ENCODE measurements at regions of chr12 and their contacts with region 1.

Region 1: DNA sequence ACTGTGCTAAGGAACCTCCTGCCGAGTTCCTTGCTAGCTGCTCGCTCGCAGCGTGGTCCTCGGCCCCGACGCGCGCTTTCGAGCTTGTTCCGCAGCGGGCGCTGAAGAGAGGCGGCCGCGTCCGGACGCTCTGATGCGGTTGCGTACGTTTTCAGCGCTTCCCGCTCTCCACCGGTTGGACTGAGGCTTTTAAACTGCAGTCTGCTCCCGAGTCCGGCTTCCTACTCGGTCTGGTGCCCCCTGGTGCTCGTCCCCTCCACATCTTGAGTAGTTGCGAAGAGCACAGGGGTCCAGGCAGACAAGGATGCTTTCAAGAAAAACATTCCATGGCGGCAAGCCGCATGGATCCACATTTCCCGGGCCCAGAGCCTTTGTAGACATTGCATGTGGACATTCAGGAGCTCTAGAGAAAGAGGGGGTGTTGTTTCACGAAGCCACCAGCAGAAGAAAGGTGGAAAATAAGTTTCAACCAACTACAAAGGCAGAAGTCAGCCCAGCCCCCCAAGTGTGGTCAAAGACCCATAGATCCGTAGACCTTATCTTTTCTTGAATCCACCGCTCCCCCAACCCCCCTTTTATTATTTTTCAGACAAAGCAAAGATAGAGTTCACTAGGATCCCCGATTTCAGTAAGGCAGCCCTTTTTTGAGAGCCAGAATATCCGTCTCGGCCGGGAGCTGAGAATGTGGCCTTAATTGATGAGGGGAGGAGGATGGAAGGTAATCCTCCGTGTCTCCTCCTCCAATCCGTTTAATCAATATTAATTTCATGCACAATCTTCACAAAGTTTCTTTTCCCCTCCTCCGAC is 984 bp upstream of the WNK1 start:
- DNase-seq: peak; percentile 90 to 92
- H3K4me3 ChIP-seq: peak overlapping the region; percentile 81
- H3K27ac ChIP-seq: peak overlapping the region; percentile 38
- H3K4me1 ChIP-seq: peaks cover 32% of the 10 kb centered on the region
- H3K27me3 ChIP-seq: no peaks in the 10 kb centered on the region
- CTCF ChIP-seq: peak; percentile 84

Region 2: DNA sequence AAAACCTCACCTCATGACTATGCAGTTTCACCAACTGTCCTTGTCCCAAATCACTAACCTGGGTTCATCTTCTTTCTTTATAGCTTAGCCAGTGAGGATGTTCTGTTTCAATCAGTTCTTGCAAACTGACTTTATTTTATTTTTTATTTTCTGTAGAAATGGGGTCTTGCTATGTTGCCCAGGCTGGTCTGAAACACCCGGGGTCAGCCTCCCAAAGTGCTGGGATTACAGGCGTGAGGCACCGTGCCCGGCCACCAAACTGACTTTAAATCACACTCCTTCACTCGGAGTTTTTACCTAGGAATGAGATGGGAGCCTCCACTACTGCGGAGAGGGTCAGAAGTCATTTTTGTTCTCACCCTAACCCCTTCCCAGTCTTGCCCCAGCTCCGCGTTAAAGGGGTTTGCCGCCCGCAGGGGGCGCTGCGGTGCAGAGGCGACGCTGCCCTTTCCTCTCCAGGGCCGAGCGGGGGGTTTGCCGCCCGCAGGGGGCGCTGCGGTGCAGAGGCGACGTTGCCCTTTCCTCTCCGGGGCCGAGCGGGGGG is 298.7 kb before region 1 on chr12:
- CTCF ChIA-PET with region 1: no interaction called
- POLR2A ChIA-PET with region 1: no interaction called
- intact Hi-C with region 1: loop called (anchors 5 kb)
- DNase-seq: no peak
- H3K4me3 ChIP-seq: no peak overlapping the region
- H3K27ac ChIP-seq: no peak overlapping the region
- H3K4me1 ChIP-seq: no peaks in the 10 kb centered on the region
- H3K27me3 ChIP-seq: peaks cover 29% of the 10 kb centered on the region
- CTCF ChIP-seq: no peak

Region 3: GRCh38 chr12:575948-576612 is 175.3 kb before region 1 on chr12:
- CTCF ChIA-PET with region 1: interaction called, 25 read pairs
- POLR2A ChIA-PET with region 1: interaction called, 26 read pairs
- intact Hi-C with region 1: loop called (anchors 1 kb)
- DNase-seq: peak; percentile 48 to 84
- H3K4me3 ChIP-seq: peak overlapping the region; percentile 33; the same call in 1 of the 2 replicates
- H3K27ac ChIP-seq: no peak overlapping the region
- H3K4me1 ChIP-seq: peaks cover 22% of the 10 kb centered on the region
- H3K27me3 ChIP-seq: no peaks in the 10 kb centered on the region
- CTCF ChIP-seq: peak; percentile 99

Region 4: DNA sequence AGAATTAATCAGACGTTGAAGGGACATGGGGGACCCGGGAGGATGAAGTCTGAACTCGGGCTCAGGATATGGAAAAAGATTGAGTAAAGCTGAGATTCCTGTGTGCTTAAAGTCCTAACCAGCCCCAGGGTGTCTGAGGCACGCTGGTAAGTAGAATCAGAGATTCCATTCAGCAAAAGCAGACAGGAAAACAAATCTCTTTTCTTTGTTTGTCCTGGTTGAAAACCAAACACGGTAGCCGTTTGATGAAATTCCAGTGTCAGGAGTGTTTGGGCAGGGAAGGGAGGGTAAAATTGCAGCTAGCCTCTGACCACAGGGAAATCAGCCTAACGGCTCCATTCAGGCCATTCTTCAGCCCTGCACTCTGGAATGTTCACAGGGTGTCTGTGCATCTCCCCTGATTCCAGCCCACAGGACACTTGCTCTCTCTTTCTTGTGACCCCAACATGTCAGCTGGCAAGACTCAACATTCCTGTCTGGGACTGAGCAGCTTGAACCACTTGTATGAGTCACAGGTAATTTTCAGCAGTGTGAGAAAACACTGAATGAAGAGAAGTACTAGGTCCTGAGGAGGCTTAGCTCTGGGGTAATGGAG is 119.2 kb before region 1 on chr12:
- CTCF ChIA-PET with region 1: interaction called, 3 read pairs
- POLR2A ChIA-PET with region 1: no interaction called
- intact Hi-C with region 1: loop called (anchors 1 kb)
- DNase-seq: peak; percentile 77 to 95
- H3K4me3 ChIP-seq: peak overlapping the region; percentile 10; the same call in 1 of the 2 replicates
- H3K27ac ChIP-seq: peak overlapping the region; percentile 68
- H3K4me1 ChIP-seq: peaks cover 57% of the 10 kb centered on the region
- H3K27me3 ChIP-seq: no peaks in the 10 kb centered on the region
- CTCF ChIP-seq: no peak

Region 5: DNA sequence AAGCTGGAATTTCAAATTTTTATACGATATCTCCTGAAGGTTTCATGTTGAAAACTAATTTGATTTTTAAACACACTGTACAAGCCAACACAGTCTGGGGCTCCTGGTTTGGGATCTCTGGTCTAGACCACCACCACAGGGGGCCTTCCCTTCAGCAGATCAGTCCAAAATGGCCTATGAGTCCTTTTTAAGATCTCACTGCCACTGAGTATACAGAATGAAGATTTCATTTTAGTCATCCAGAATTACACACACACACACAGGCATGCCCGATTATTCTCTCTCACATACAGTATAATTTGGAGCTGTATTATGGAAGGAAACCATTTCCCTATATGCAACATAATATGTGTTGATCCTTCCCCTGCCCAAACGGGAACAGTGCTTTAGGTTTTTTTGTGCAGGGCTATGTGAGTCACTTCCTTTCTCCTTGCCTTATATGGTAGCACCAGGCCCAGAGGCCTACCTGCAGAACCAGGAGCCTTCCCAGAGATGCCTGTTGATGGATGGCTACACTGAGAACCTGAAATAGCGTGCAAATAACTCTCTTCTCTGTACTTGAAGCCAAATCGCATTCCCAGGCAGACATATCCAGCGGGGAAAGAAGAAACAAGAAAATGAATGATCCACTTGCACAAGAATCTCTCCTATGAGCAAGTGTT is 27.1 kb before region 1 on chr12:
- CTCF ChIA-PET with region 1: no interaction called
- POLR2A ChIA-PET with region 1: no interaction called
- intact Hi-C with region 1: no loop called
- DNase-seq: peak; percentile 48 to 67
- H3K4me3 ChIP-seq: no peak overlapping the region
- H3K27ac ChIP-seq: no peak overlapping the region
- H3K4me1 ChIP-seq: peaks cover 7% of the 10 kb centered on the region
- H3K27me3 ChIP-seq: no peaks in the 10 kb centered on the region
- CTCF ChIP-seq: no peak

Region 6: DNA sequence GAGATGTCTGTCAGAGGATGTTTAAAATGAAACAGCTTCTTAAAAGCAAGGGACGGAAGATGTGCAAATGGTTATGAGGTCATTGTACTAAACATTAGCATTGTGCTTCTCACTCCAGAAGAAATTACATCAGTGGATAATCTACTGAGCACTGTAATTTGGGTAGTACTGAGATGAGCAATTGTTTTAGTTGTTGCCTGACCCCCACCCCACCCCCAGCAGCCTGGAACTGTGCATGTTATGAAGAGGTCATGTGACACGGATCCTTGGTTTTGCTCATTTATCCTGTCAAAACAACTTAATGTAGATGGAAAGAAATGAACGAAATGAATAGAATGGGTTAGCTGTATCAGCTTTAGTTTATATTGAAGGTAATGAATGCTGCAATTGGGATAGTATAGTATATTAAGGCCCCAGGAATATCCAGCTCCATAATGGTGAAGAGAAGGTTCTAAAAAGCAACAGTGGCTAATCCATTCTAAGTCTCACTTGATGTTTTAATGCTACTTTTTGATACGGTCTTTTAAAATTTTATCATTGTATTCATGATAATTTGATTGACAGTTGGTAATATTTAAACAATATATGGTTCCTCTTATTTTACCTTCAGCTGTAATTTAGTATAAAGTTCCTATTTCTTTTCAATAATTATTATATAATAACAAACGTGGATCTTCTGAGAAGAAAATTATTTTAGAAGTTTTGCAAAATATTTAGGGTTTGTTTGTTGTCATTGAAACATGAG is 59.4 kb after region 1 on chr12:
- CTCF ChIA-PET with region 1: interaction called, 8 read pairs
- POLR2A ChIA-PET with region 1: no interaction called
- intact Hi-C with region 1: loop called (anchors 2 kb)
- DNase-seq: no peak
- H3K4me3 ChIP-seq: no peak overlapping the region
- H3K27ac ChIP-seq: no peak overlapping the region
- H3K4me1 ChIP-seq: no peaks in the 10 kb centered on the region
- H3K27me3 ChIP-seq: no peaks in the 10 kb centered on the region
- CTCF ChIP-seq: no peak

Region 7: DNA sequence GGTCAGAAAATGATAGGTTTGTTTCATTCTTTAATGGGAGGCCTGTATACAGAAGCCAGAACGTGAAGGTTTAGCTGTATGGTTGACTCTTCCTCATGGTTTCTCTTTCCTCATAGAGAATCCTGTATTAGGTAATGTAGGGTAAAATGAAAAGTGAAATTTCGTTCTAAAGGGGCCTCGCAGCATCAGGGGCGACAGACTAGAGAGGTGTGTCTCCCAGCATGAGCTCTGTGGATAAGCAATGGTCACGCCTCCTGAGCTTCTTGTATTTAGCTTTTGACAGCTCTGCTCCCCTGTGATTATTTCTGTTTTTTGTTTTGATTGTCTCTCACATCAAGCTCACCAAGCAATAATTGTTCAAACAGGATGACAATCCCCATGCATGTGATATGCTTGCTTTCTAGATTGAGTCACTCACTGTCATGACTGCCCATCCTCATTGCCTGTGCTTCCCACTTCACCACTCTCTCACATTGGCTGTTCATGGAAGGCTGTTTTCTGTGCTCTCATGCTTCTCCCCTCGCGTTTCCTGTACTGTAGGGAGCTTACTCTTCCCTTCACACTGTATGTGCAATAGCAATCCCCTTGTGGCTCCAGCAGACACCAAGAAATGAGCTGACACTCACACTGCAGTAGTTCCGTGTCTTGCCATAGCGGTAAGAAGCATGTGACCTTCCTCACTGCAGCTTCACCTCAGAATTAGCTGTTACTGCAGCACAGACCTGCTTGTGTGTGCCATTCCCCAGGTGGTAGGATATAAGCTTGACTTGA is 154.1 kb after region 1 on chr12:
- CTCF ChIA-PET with region 1: no interaction called
- POLR2A ChIA-PET with region 1: no interaction called
- intact Hi-C with region 1: no loop called
- DNase-seq: no peak
- H3K4me3 ChIP-seq: no peak overlapping the region
- H3K27ac ChIP-seq: no peak overlapping the region
- H3K4me1 ChIP-seq: no peaks in the 10 kb centered on the region
- H3K27me3 ChIP-seq: no peaks in the 10 kb centered on the region
- CTCF ChIP-seq: no peak

Region 8: GRCh38 chr12:1594261-1595025 is 843.0 kb after region 1 on chr12 and contains the start of gene FBXL14:
- CTCF ChIA-PET with region 1: no interaction called
- POLR2A ChIA-PET with region 1: no interaction called
- intact Hi-C with region 1: loop called (anchors 5 kb)
- DNase-seq: peak; percentile 65 to 90
- H3K4me3 ChIP-seq: peak within 1 kb of the TSS; percentile 91
- H3K27ac ChIP-seq: peak within 1 kb of the TSS; percentile 20; the same call in 1 of the 2 replicates
- H3K4me1 ChIP-seq: peaks cover 44% of the 10 kb centered on the region
- H3K27me3 ChIP-seq: no peaks in the 10 kb centered on the region
- CTCF ChIP-seq: no peak
- total RNA-seq, gene FBXL14: 16.3 and 21.1 TPM in 2 replicates

Measured in PC-9 (cell line).